Activated naive CD4-positive, alpha-beta T cell treated with anti-CD3 and anti-CD28 coated beads for 36 hours (primary cell): ENCODE measurements at regions of chr10 and their contacts with region 1.

Region 1: GRCh38 chr10:14560274-14560673 is 214.4 kb downstream of the FAM107B start:
- DNase-seq: peak; percentile 94
- H3K4me3 Mint-ChIP-seq: peak overlapping the region; percentile 13
- H3K27ac Mint-ChIP-seq: peak overlapping the region; percentile 88
- H3K4me1 Mint-ChIP-seq: peaks cover 91% of the 10 kb centered on the region
- H3K27me3 Mint-ChIP-seq: no peaks in the 10 kb centered on the region

Region 2: DNA sequence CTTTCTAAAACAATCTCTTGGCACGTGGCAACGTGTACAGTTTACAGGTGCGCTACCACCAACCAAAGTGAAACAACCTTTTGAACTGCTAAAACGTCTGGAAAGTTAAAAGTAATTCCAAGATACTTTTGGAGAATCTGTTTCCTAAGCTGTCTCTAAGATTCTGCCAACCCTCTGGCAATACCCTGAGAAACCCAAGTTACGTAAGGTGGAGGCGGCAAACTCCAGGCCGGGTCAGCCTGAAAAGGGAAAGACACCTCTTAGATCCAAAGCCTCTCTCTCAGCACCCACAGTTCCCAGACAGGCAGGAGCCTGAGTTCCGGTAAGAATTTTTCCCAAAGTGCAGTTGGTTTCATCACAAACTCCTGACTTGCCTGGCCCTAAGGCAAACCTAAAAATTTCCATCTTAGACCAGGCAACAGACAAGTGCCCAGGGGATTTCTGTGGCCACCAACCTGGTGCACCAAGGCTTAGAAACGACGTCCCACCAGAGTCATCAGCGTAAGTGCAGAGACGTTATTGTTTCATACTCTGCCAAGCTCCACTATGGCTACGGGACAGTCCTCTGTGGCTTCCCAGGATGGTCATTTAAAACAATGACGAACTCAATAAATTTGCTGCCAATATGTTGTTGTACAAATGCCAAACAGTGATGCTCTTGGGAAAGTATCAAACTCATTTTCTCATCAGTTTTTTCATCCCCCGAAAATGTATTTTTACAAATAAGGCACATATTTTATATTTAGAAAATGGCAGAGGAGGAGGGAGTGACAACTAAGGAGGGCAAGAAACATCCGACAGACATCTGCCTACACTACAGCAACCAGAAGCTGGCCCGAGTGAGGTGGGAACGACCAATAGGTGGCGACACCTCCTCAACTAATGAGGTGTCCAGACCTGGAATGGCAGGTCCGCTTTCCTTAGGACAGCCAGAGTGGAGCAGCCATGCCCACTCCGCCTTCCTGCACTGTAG is 23.7 kb before region 1 on chr10:
- CTCF ChIA-PET with region 1: interaction called, 3 read pairs
- intact Hi-C with region 1: loop called (anchors 2 kb)
- DNase-seq: peak; percentile 70
- H3K4me3 Mint-ChIP-seq: no peak overlapping the region
- H3K27ac Mint-ChIP-seq: no peak overlapping the region
- H3K4me1 Mint-ChIP-seq: peaks cover 83% of the 10 kb centered on the region
- H3K27me3 Mint-ChIP-seq: no peaks in the 10 kb centered on the region

Region 3: DNA sequence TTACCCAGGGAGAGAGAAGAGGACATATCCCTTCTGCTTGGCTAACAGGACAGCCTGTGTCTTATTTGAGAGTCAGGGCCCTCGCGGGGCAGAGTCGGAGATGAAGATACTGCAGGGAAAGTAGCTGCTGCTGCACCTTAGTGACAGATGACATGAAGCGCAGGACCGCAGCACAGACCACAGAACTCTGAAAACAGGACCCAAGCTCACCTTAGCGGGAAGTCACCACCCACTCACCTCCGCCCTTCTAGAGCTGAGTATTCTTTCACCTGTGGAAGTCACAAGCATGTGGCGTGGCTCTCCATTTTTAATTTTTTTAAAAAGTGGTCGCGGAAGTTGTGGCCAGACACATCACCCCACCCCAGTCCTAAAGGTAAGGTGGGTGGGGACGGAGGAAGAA is 23.0 kb after region 1 on chr10:
- CTCF ChIA-PET with region 1: interaction called, 7 read pairs
- intact Hi-C with region 1: loop called (anchors 1 kb)
- DNase-seq: peak; percentile 93
- H3K4me3 Mint-ChIP-seq: peak overlapping the region; percentile 51
- H3K27ac Mint-ChIP-seq: peak overlapping the region; percentile 97
- H3K4me1 Mint-ChIP-seq: peaks cover 84% of the 10 kb centered on the region
- H3K27me3 Mint-ChIP-seq: no peaks in the 10 kb centered on the region

Region 4: GRCh38 chr10:14665304-14665703 is 105.0 kb after region 1 on chr10:
- CTCF ChIA-PET with region 1: no interaction called
- intact Hi-C with region 1: loop called (anchors 1 kb)
- DNase-seq: peak; percentile 65
- H3K4me3 Mint-ChIP-seq: no peak overlapping the region
- H3K27ac Mint-ChIP-seq: peak overlapping the region; percentile 78
- H3K4me1 Mint-ChIP-seq: peaks cover 53% of the 10 kb centered on the region
- H3K27me3 Mint-ChIP-seq: no peaks in the 10 kb centered on the region

Region 5: GRCh38 chr10:14837757-14838581 is 277.7 kb after region 1 on chr10 and contains the starts of genes CDNF, HSPA14 and MSANTD7:
- CTCF ChIA-PET with region 1: interaction called, 3 read pairs
- intact Hi-C with region 1: loop called (anchors 5 kb)
- DNase-seq: peak; percentile 99
- H3K4me3 Mint-ChIP-seq: peak within 1 kb of the TSS; percentile 92
- H3K27ac Mint-ChIP-seq: peak within 1 kb of the TSS; percentile 93
- H3K4me1 Mint-ChIP-seq: peaks cover 22% of the 10 kb centered on the region
- H3K27me3 Mint-ChIP-seq: no peaks in the 10 kb centered on the region
- total RNA-seq, gene CDNF: 1.6 to 1.8 TPM
- total RNA-seq, gene HSPA14: 28.1 to 29.9 TPM
- total RNA-seq, gene MSANTD7: 19.6 to 21.3 TPM

Region 6: DNA sequence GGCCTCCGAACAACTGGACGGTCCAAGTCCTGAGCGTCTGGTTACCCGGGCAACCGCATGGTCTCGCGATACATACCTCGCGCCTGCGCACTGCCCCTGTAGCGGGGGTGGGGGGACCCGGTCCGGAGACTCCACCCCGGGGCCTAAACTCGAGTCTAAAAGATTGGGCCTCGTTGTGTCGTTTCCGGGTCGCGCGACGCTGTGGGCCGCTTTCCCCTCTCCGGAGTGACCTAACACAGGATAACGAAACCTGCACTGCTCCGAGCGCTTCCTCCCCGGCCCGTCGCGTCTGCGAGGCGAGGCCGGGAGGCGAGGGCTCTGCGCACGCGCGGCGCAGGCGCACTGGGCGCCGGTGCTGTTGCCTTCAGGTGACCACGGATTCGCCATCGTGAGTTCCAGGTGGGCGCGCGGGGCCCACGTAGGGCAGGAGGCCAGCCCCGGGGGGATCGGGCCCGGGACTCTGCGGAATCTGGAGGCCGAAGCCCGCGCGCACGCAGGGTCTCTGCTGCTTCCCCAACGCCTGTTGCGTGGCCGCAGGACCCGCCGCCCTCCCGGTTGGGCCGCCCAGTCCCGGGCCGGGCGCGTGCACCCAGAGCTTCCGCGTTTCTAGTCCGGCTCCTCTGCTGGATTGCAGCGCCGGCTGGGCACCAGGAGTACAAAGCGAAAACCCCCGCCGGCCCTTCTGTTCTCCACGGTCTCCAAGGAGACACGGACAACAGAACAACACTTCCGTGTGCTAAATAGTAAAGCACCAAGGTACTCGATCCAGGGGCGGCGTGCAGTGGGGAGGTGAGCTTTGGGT is 536.9 kb after region 1 on chr10 and contains the start of gene RPP38:
- CTCF ChIA-PET with region 1: no interaction called
- intact Hi-C with region 1: loop called (anchors 10 kb)
- DNase-seq: peak; percentile 96
- H3K4me3 Mint-ChIP-seq: peak within 1 kb of the TSS; percentile 97
- H3K27ac Mint-ChIP-seq: peak within 1 kb of the TSS; percentile 94
- H3K4me1 Mint-ChIP-seq: peaks cover 36% of the 10 kb centered on the region
- H3K27me3 Mint-ChIP-seq: no peaks in the 10 kb centered on the region
- total RNA-seq, gene RPP38: 15.6 to 16.3 TPM